ENCODE measurements at regions of chr12 and their contacts with region 1.

Region 1: DNA sequence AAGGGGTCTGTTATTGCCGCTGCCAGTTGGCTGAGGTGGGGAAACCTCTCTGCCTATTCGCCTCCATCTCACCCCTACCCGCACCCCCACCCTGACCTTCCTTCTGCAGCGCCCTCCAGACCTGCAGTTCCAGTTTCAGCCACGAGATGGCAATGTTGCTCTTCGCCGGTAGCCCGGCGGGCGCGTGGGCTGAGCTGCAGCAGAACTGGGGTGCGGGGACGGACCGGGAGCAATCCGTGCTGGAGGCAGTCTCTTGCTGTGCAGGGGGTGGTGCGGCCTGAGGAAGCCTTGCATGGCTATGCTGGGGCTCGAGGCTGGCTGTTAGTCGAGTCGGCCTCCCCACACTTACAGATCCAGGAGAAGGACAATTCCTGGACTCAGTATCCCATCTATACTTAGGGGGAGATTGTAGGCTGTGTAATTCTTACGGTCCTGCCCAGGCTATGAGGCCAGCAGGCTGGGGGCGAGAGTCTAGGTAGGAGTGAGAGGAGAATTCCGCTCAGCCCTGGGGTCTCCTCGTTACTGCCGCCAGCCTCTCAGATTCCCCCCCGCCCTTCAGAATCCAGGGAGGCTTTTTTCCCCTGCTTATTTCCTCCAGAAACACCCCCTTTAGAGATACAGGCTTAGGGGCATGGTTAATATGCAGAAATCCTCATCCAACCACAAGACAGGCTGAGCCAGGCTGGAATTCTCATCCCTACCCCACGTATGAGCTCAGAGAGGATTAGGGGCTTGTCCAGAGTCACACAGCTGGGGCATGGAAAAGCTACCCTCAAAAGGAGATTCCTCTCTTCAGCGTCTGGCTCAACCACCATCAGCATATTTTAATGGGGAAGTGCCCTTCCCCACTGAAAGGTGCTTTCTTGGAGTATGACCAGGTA is 118.2 kb downstream of the AACS start:
- DNase-seq: peak; percentile 78 to 93
- ATAC-seq: peak; percentile 87
- H3K4me3 ChIP-seq: no peak overlapping the region
- H3K27ac ChIP-seq: no peak overlapping the region
- H3K4me1 ChIP-seq: no peaks in the 10 kb centered on the region
- H3K27me3 ChIP-seq: no peaks in the 10 kb centered on the region

Region 2: DNA sequence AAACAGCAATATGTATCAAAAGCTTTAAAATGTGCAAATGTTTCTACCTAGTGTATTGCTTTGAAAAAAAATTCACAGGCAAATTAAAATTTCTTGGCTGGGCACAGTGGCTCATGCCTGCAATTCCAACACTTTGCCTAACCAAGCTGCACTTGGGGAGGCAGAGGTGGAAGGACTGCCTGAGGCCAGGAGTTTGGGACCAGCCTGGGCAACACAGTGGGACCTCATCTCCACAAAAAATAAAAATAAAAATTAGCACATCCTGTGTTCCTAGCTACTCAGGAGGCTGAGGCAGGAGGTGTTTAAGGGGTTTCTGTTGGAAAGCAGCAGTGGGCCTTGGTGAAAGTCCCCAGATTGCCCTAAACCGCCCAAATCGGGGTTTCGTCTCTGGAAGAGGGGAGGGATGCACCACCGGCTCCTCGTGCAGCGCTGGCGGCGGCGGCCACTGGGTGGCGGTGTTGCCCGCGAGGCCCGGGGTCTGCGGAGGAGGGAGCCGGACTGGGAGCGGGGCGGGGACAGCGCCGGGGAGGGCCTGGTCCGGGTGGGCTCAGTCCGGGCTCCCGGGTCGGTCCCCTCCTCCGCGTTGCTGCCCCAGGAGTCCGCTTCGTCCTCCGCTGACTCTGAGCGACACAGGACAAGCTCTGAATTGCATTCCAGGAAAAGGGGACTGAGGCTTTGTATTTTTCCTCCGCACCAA is 147.4 kb after region 1 on chr12:
- intact Hi-C with region 1: loop called in 1 of 2 experiments (anchors 5 kb)
- DNase-seq: peak; percentile 65 to 89
- ATAC-seq: peak; percentile 87
- H3K4me3 ChIP-seq: peak overlapping the region in 1 of 2 donors; percentile 0
- H3K27ac ChIP-seq: no peak overlapping the region
- H3K4me1 ChIP-seq: no peaks in the 10 kb centered on the region
- H3K27me3 ChIP-seq: no peaks in the 10 kb centered on the region

Region 3: GRCh38 chr12:125402874-125403789 is 219.7 kb after region 1 on chr12:
- intact Hi-C with region 1: loop called in 1 of 2 experiments (anchors 5 kb)
- DNase-seq: no peak
- ATAC-seq: no peak
- H3K4me3 ChIP-seq: no peak overlapping the region
- H3K27ac ChIP-seq: no peak overlapping the region
- H3K4me1 ChIP-seq: no peaks in the 10 kb centered on the region
- H3K27me3 ChIP-seq: no peaks in the 10 kb centered on the region

Region 4: DNA sequence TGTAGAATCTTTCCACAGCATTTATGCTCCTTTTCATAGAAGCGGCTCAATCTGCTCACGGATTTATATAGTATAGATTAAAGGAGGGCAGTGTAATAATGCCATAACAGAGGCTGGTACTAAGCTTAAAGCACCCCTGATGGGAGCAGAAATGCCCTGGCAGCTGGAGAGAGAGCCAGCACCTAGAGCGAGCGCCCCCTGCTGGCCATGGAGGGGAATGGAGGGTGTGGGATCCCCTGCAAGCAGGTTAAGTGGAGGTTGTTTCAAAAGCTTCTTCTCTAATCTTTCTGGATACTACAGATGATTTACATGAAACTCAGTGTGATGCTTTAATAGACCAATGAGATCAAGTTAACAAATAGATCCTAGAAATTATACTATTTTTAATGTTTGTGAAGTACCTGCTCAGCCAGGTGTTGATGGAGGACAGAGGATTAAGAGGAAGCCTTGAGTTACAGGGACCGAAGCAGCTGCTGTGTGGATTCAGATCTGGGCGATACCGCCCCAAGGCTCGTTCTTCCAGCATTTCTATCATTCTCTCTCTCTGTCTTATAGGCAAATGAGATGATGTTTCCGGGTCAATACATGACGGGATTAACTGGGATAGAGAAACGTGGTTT is 1564.2 kb after region 1 on chr12:
- intact Hi-C with region 1: loop called (anchors 5 to 10 kb)
- DNase-seq: peak in 1 of 2 donors; percentile 49
- ATAC-seq: no peak
- H3K4me3 ChIP-seq: no peak overlapping the region
- H3K27ac ChIP-seq: no peak overlapping the region
- H3K4me1 ChIP-seq: no peaks in the 10 kb centered on the region
- H3K27me3 ChIP-seq: no peaks in the 10 kb centered on the region

Region 5: DNA sequence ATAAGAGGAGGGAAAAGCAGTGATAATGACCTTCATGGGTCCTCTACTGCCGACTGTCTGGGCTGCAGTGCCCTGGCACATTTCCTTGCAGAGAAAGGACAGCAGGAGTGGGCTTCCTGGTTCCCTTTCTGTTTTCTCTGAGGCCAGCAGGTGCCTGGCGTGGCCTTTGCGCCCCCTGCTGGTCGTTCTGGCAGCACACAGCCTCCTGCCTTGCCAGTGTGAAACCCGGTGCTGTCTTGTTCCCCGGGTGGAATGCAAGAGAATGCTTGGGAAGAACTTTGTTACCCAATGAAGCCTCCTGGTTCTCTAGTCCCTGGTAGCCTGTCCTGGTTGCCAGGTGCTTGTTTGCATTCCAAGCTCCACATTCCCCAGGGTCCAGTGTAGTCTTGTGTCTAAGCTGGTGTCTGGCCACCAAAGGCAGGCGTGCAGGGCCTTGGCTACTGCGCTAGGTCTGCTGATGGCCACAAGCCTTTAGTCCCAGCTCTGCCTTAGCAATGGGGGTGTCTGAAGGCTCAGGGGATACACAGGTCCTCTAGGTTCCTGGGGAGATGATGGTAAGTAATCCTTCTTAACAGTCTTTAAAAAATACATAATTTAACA is 1691.1 kb after region 1 on chr12:
- intact Hi-C with region 1: loop called (anchors 5 kb)
- DNase-seq: peak; percentile 58 to 82
- ATAC-seq: peak; percentile 58
- H3K4me3 ChIP-seq: no peak overlapping the region
- H3K27ac ChIP-seq: no peak overlapping the region
- H3K4me1 ChIP-seq: no peaks in the 10 kb centered on the region
- H3K27me3 ChIP-seq: no peaks in the 10 kb centered on the region

Measured in aorta (tissue), 5 donors.